Activated CD4-positive, alpha-beta memory T cell treated with anti-CD3 and anti-CD28 coated beads, Interleukin-2, amount 10 ng/mL, durations not matched to agents 7 days and 5 days (primary cell): ENCODE measurements at regions of chr17 and their contacts with region 1.

Region 1: GRCh38 chr17:77465358-77466041 is 324.7 kb downstream of the SEC14L1 start:
- DNase-seq: peak; percentile 87
- H3K4me3 Mint-ChIP-seq: peak overlapping the region; percentile 59
- H3K27ac Mint-ChIP-seq: peak overlapping the region; percentile 86
- H3K4me1 Mint-ChIP-seq: peaks cover 84% of the 10 kb centered on the region
- H3K27me3 Mint-ChIP-seq: no peaks in the 10 kb centered on the region

Region 2: DNA sequence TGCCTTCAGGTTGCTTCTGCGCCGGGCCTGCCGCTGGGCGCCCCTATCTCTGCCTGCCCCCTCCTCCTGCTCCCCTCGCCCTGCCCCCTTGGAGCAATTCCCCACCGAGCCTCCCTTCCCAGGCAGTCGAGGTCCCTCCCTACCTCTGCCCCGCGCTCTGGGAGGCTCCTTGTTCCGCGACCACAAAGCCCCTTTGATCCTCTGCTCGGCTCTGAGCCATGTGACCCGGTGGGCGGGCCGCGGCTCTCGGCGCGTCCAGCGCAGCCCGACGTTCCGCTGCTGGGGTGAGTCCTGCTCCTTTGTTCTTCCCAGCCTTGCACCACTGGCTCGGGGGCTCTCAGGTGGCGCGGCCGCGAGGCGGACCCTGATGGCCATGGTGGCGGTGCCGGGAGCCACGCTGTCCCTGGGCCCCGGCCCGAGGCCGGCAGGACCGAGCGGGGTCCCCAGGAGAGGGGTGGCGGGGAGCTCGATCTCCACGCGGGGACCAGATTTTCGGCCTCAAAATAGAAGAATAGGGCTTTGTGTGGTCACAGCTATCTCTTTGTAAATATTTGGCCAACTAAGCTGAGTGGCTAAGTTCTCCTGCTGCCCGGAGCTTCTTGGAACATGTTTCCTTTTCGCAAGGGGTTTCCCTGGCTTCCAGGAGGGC is 14.1 kb before region 1 on chr17:
- CTCF ChIA-PET with region 1: interaction called, 5 read pairs
- POLR2A ChIA-PET with region 1: interaction called, 164 read pairs
- DNase-seq: peak; percentile 71
- H3K4me3 Mint-ChIP-seq: peak overlapping the region; percentile 90
- H3K27ac Mint-ChIP-seq: peak overlapping the region; percentile 99
- H3K4me1 Mint-ChIP-seq: peaks cover 74% of the 10 kb centered on the region
- H3K27me3 Mint-ChIP-seq: no peaks in the 10 kb centered on the region

Region 3: GRCh38 chr17:77476931-77477877 is 11.7 kb after region 1 on chr17:
- CTCF ChIA-PET with region 1: interaction called, 5 read pairs
- POLR2A ChIA-PET with region 1: interaction called, 57 read pairs
- DNase-seq: no peak
- H3K4me3 Mint-ChIP-seq: no peak overlapping the region
- H3K27ac Mint-ChIP-seq: peak overlapping the region; percentile 40
- H3K4me1 Mint-ChIP-seq: peaks cover 69% of the 10 kb centered on the region
- H3K27me3 Mint-ChIP-seq: no peaks in the 10 kb centered on the region